Cardiac septum (tissue), 1 donor: ENCODE measurements at regions of chrX and their contacts with region 1.

Region 1: DNA sequence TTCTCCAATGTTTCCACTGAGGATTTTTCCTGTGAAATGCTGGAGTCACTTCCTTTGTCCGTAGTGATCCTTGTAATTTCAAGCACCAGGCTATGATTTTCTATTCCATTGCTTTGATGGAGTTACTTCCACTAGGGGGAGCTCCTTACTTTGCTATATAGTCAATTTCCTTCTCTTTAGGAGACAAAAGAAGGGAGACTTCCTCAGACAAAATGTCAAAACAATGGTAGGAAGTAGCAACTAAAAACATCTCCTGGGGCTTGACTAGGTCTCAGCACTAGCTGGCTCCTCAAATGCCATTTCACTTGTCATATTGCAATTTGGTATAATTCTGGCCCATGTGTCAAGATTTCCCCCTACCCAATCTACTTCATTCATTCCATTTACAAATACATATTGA is 24.1 kb downstream of the ZCCHC12 start:
- DNase-seq: no peak

Region 2: GRCh38 chrX:118770133-118770760 is 77.4 kb before region 1 on chrX:
- intact Hi-C with region 1: no loop called
- DNase-seq: no peak

Region 3: DNA sequence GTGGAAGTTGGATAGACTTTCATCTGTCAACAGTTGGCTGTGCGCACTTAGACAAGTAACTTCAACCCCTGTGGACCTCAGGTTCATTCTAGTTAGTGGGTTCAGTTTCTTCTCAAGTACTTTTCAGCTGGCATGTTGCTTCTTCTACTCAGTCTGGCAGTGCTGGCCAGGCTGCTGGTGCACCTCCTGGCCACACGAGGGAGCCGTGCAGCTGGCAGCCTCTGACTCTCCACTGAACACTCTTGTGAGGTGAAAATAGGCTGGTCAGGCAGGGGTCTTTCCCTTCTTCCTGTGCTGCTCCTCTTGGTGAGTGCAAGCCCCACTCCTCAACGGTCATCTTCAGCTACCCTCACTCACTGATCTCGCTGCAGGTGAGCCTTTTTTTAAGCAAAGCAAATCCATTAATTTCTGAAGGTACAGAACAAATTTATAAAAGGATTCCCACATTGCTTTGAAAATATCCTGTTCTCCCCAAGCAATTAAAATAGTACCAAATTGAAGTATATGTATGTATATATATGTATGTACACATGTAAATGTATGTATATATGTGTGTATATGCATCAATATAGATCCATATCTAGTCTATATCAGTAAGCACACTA is 157.3 kb after region 1 on chrX:
- intact Hi-C with region 1: loop called (anchors 5 kb)
- DNase-seq: no peak

Region 4: DNA sequence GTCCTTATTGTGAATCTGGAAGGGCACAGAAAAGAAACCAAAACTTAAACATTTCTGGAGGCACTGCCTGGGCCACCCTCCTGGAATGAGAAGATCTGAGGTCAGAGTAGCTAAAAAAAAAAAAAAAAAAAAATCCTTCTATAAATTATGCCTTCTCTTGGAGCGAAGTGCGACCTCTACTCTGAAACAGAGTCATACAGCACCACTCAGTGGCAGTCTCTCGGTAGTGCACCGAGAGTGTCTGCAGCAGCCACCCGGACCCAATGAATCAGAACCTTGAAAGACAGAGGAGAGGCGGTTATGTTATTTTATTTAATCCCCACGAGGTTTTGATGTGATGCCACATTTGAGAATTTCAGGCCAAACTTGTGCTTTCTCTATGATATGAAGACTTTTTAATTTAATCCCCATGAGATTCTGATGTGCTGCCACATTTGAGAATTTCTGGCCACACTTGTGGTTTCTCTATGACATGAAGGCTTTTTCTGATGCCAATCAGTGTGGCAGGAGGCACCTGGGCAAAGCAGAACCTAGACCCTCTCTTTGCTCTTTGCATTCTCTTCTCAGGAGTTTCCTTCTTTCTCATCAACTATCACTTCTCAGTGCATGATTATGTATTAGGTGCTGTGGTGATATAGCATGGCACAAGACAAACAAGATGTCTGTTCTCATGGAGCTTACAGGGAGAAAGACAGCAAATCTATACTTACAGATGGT is 219.5 kb after region 1 on chrX:
- intact Hi-C with region 1: loop called (anchors 5 kb)
- DNase-seq: no peak

Region 5: GRCh38 chrX:119211649-119212014 is 364.0 kb after region 1 on chrX:
- intact Hi-C with region 1: loop called (anchors 10 kb)
- DNase-seq: no peak